Activated B cell treated with CpG ODN at 0.5 μM for 24 hours (primary cell): ENCODE measurements at regions of chr13 and their contacts with region 1.

Region 1: DNA sequence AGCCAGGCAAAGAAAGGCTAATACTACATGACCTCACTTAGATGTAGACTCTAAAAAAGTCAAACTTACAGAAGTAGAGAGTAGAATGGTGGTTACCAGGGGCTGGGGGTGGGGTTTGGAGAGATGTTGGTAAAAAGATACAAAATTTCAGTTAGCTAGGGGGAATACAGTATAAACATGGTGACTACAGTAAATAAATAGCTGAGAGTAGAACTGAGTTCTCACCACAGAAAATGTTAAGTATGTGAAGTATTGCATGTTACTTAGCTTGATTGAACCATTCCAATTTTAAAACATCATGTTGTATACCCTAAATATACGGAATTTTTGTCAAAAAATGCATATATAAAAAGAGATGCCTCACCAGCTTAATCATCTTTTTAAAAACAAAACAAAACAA is 67.5 kb upstream of the DOCK9 start:
- DNase-seq: no peak
- ATAC-seq: no peak
- H3K4me3 Mint-ChIP-seq: no peak overlapping the region
- H3K27ac Mint-ChIP-seq: no peak overlapping the region
- H3K4me1 Mint-ChIP-seq: peaks cover 23% of the 10 kb centered on the region
- H3K27me3 Mint-ChIP-seq: peaks cover 60% of the 10 kb centered on the region
- CTCF ChIP-seq: no peak

Region 2: DNA sequence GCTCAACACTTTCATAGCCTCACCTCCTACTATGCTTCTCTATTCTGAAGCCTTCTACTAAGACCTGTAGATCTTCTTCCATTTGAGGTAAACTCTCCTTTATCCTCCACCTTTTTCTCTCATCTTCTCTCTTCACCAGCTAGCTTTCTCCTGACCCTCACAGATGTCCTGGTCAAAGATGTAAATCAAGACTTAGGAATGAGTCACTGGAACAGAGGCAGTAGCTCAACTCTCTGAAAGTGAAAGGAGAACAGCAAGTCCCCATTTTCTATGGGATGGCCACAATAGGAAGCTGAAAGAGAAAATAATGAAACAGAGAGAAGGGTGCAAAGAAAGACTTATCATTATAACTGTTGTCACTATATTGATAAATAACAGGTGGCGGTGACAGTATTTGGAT is 18.6 kb after region 1 on chr13:
- CTCF ChIA-PET with region 1: no interaction called
- POLR2A ChIA-PET with region 1: no interaction called
- intact Hi-C with region 1: loop called (anchors 1 kb)
- DNase-seq: no peak
- ATAC-seq: no peak
- H3K4me3 Mint-ChIP-seq: no peak overlapping the region
- H3K27ac Mint-ChIP-seq: no peak overlapping the region
- H3K4me1 Mint-ChIP-seq: peaks cover 34% of the 10 kb centered on the region
- H3K27me3 Mint-ChIP-seq: peaks cover 2% of the 10 kb centered on the region
- CTCF ChIP-seq: no peak